Activated CD8-positive, alpha-beta memory T cell treated with anti-CD3 and anti-CD28 coated beads, Interleukin-2, amount 10 ng/mL, durations not matched to agents 7 days and 5 days (primary cell): ENCODE measurements at regions of chr7 and their contacts with region 1.

Region 1: GRCh38 chr7:138886501-138886917 is 88.5 kb upstream of the ATP6V0A4 start:
- DNase-seq: peak; percentile 54
- ATAC-seq: peak; percentile 83
- H3K4me3 Mint-ChIP-seq: peak overlapping the region; percentile 30
- H3K27ac Mint-ChIP-seq: peak overlapping the region; percentile 85
- H3K4me1 Mint-ChIP-seq: peaks cover 29% of the 10 kb centered on the region
- H3K27me3 Mint-ChIP-seq: no peaks in the 10 kb centered on the region

Region 2: GRCh38 chr7:138898255-138898654 is 11.7 kb after region 1 on chr7:
- CTCF ChIA-PET with region 1: interaction called, 33 read pairs
- DNase-seq: no peak
- ATAC-seq: peak; percentile 68
- H3K4me3 Mint-ChIP-seq: no peak overlapping the region
- H3K27ac Mint-ChIP-seq: peak overlapping the region; percentile 76
- H3K4me1 Mint-ChIP-seq: peaks cover 30% of the 10 kb centered on the region
- H3K27me3 Mint-ChIP-seq: peaks cover 25% of the 10 kb centered on the region

Region 3: GRCh38 chr7:138981332-138982203 is 95.1 kb after region 1 on chr7 and contains the start of gene KIAA1549:
- CTCF ChIA-PET with region 1: interaction called, 24 read pairs
- DNase-seq: peak; percentile 70
- ATAC-seq: peak; percentile 93
- H3K4me3 Mint-ChIP-seq: peak within 1 kb of the TSS; percentile 78
- H3K27ac Mint-ChIP-seq: peak within 1 kb of the TSS; percentile 29
- H3K4me1 Mint-ChIP-seq: peaks cover 14% of the 10 kb centered on the region
- H3K27me3 Mint-ChIP-seq: peaks cover 57% of the 10 kb centered on the region
- total RNA-seq, gene KIAA1549: 0.61 to 1.1 TPM

Region 4: GRCh38 chr7:139016931-139017511 is 130.5 kb after region 1 on chr7:
- CTCF ChIA-PET with region 1: interaction called, 17 read pairs
- DNase-seq: peak; percentile 77
- ATAC-seq: peak; percentile 96
- H3K4me3 Mint-ChIP-seq: no peak overlapping the region
- H3K27ac Mint-ChIP-seq: no peak overlapping the region
- H3K4me1 Mint-ChIP-seq: peaks cover 7% of the 10 kb centered on the region
- H3K27me3 Mint-ChIP-seq: peaks cover 22% of the 10 kb centered on the region

Region 5: DNA sequence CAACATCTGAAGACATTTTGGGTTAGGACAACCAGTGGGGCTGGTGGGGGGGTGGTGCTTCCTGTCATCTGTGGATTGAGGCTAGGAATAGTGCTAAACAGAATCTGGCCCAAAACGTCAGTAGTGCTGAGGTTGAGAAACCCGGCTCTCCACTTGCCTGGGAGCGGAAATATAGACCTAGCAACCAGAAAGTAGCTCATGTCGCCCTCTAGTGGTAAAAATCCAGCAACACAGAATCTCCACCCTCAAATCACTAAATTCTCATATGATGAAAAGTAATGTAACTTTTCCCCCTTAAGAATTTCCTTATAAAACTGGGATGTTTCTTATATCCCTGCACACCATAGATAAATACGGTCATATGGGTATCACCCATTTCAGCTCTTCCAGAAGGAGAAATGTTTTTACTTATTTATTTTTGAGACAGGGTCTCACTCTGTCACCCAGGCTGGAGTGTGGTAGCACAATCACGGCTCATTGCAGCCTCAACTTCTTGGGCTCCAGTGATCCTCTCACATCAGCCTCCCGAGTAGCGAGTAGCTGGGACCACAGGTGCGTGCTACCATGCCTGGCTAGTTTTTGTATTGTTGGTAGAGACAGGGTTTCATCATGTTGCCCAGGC is 188.6 kb after region 1 on chr7:
- CTCF ChIA-PET with region 1: interaction called, 12 read pairs
- DNase-seq: peak; percentile 83
- ATAC-seq: peak; percentile 68
- H3K4me3 Mint-ChIP-seq: peak overlapping the region; percentile 45
- H3K27ac Mint-ChIP-seq: peak overlapping the region; percentile 84
- H3K4me1 Mint-ChIP-seq: peaks cover 70% of the 10 kb centered on the region
- H3K27me3 Mint-ChIP-seq: no peaks in the 10 kb centered on the region